Vagina (tissue), 2 donors: ENCODE measurements at regions of chr19 and their contacts with region 1.

Region 1: GRCh38 chr19:46016426-46017094 is 6.3 kb downstream of the PGLYRP1 start:
- DNase-seq: no peak
- H3K4me3 ChIP-seq: peak overlapping the region; percentile 63 to 67
- H3K27ac ChIP-seq: peak overlapping the region; percentile 23
- H3K4me1 ChIP-seq: peaks cover 23% of the 10 kb centered on the region
- H3K27me3 ChIP-seq: no peaks in the 10 kb centered on the region
- CTCF ChIP-seq: peak; percentile 27 to 87 (median 58)
- POLR2A ChIP-seq: no peak

Region 2: GRCh38 chr19:45817010-45817724 is 199.4 kb before region 1 on chr19:
- intact Hi-C with region 1: loop called (anchors 10 kb)
- DNase-seq: peak in 1 of 2 donors; percentile 78
- H3K4me3 ChIP-seq: no peak overlapping the region
- H3K27ac ChIP-seq: peak overlapping the region; percentile 60
- H3K4me1 ChIP-seq: peaks cover 18% of the 10 kb centered on the region
- H3K27me3 ChIP-seq: no peaks in the 10 kb centered on the region
- CTCF ChIP-seq: peak; percentile 90 to 97 (median 94)
- POLR2A ChIP-seq: no peak

Region 3: GRCh38 chr19:45876411-45877197 is 140.0 kb before region 1 on chr19:
- intact Hi-C with region 1: loop called (anchors 10 kb)
- DNase-seq: no peak
- H3K4me3 ChIP-seq: peak overlapping the region; percentile 18 to 24
- H3K27ac ChIP-seq: peak overlapping the region; percentile 56
- H3K4me1 ChIP-seq: peaks cover 11% of the 10 kb centered on the region
- H3K27me3 ChIP-seq: no peaks in the 10 kb centered on the region
- CTCF ChIP-seq: no peak
- POLR2A ChIP-seq: no peak

Region 4: GRCh38 chr19:45886427-45887199 is 129.9 kb before region 1 on chr19:
- intact Hi-C with region 1: no loop called
- DNase-seq: peak in 1 of 2 donors; percentile 94
- H3K4me3 ChIP-seq: peak overlapping the region; percentile 72 to 84
- H3K27ac ChIP-seq: peak overlapping the region; percentile 93
- H3K4me1 ChIP-seq: peaks cover 36% of the 10 kb centered on the region
- H3K27me3 ChIP-seq: no peaks in the 10 kb centered on the region
- CTCF ChIP-seq: no peak
- POLR2A ChIP-seq: peak in 1 of 2 donors; percentile 49

Region 5: DNA sequence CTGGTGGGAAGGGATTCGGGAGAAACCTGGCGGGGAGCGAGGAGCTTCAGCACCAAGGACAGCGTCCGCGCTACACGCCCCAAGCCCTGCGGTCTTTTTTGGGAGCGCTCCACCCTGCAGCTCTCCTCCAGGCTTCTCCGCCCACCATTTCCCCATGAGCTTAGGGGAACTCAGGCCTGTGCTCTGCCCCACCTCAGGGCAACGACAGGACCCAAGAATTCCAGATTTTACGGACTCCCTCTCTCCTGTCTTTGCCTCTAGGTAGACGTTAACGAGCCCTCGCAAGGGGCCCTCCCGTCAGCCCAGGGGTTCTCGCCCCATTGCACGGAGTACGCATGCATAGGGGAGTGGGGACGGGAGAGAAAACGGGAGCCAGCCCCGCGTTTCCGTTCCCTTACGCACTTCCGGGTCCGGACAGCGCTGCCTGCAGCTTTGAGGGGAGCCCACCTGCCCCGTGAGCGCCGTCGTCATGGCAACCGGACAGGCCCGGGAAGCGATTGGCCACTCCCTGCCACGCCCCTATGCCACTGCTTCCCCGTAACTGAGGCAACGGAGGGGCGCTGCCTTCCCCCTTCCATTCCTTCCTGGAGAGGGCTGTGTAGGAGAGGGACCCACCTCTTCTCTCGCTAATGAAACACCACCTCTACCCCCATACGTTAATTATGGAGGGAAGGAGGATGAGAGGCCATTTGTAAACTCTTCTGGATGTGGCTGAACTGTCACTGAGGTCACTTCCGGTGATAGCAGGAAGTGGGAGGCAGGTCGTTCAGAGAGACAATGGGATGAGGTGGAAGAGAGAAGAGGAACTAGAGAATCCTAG is 63.7 kb before region 1 on chr19:
- intact Hi-C with region 1: no loop called
- DNase-seq: no peak
- H3K4me3 ChIP-seq: peak overlapping the region in 1 of 2 donors; percentile 16
- H3K27ac ChIP-seq: no peak overlapping the region
- H3K4me1 ChIP-seq: peaks cover 10% of the 10 kb centered on the region
- H3K27me3 ChIP-seq: no peaks in the 10 kb centered on the region
- CTCF ChIP-seq: no peak
- POLR2A ChIP-seq: no peak